ENCODE measurements at regions of chr17 and their contacts with region 1.

Region 1: DNA sequence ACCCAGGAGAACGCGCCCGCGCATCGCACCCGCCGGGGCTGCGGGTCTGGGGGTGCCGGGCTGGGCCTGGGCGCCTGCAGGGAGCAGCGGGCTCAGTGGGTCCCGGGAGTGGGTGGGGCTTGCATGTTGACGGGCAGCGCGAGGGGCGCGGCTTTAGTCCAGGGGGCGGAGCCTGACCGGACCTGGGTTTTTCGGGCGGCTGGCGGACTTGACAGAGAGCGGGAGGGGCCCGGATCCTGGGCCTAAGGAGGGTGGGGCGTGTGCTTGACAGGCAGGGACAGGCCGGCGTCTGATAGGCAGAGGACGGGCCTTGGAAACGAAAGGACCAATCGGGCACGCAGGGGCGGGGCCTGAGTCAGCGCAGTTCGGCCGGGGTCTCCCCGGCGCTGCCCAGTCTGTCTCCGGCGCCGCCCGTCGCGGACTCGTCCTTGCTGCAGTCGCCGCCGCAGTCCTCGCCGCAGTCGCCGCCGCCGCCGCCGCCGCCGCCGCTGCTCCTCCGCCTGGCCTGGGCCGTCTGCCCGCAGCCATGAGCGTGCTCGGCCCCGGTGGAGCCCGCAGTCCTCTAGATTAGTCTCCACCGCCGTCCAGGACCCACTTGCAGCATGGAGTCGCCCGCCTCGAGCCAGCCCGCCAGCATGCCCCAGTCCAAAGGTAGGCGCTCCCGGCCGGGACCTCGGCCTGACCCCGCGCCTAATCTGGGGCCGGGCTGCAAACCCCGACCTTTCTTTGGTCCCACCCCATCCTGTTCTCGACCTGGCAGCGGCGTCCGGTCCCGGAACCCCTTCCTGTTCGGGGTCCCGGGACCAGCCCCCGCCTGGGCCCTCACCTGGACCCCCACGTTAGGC is at the start of gene MAP2K3:
- DNase-seq: peak; percentile 99
- H3K4me3 Mint-ChIP-seq: peak within 1 kb of the TSS; percentile 86
- H3K27ac Mint-ChIP-seq: peak within 1 kb of the TSS; percentile 83
- H3K4me1 Mint-ChIP-seq: peaks cover 46% of the 10 kb centered on the region
- H3K27me3 Mint-ChIP-seq: no peaks in the 10 kb centered on the region
- CTCF ChIP-seq: no peak
- total RNA-seq, gene MAP2K3: 25.7 and 45.2 TPM in 2 replicates

Region 2: GRCh38 chr17:21119247-21119918 is 165.2 kb before region 1 on chr17:
- CTCF ChIA-PET with region 1: interaction called, 4 read pairs
- POLR2A ChIA-PET with region 1: interaction called, 6 read pairs
- intact Hi-C with region 1: loop called (anchors 2 kb)
- DNase-seq: peak; percentile 68
- H3K4me3 Mint-ChIP-seq: no peak overlapping the region
- H3K27ac Mint-ChIP-seq: no peak overlapping the region
- H3K4me1 Mint-ChIP-seq: peaks cover 6% of the 10 kb centered on the region
- H3K27me3 Mint-ChIP-seq: no peaks in the 10 kb centered on the region
- CTCF ChIP-seq: peak; percentile 82

Region 3: DNA sequence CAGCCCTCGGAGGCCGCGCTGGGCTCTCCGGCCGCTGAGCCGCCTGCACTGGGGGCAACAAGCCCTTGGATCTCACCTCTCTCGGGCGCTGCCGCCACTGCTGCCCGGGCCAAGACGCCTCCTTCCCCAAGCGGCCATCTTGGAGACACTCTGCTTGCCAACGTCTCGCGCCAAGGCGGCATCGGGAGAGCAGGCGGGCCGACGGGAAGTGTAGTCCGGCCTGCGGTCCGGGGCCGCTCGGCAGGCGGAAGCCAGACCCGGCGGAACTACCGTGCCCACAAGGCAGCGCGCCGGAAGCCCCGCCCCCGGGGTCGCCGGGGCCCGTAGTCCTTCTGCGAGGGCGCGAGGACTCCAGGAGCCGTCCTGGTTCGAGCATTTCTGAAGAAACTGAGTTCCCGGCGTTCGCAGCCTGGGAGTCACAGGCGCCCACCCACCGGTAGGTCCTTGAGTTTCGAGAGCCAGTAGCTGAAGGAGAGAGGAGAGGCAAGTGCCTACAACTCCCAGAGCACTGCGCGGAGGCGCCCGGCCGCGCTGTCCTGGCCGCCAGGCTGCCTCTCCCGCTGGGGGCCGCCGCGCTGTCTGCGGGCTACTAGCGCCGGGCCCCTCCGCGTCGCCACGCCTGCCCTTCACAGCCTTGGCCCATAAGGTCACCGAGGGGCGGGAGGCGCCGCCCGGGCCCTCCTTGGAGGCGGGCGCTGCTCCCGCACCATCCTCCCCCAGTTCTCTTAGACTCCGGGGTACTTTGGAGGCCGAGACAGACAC is 70.3 kb before region 1 on chr17 and contains the start of gene TMEM11:
- CTCF ChIA-PET with region 1: interaction called, 6 read pairs
- POLR2A ChIA-PET with region 1: interaction called, 47 read pairs
- intact Hi-C with region 1: loop called (anchors 5 kb)
- DNase-seq: peak; percentile 94
- H3K4me3 Mint-ChIP-seq: peak within 1 kb of the TSS; percentile 88
- H3K27ac Mint-ChIP-seq: peak within 1 kb of the TSS; percentile 96
- H3K4me1 Mint-ChIP-seq: peaks cover 39% of the 10 kb centered on the region
- H3K27me3 Mint-ChIP-seq: no peaks in the 10 kb centered on the region
- CTCF ChIP-seq: peak; percentile 6
- total RNA-seq, gene TMEM11: 27.8 and 33.5 TPM in 2 replicates

Region 4: DNA sequence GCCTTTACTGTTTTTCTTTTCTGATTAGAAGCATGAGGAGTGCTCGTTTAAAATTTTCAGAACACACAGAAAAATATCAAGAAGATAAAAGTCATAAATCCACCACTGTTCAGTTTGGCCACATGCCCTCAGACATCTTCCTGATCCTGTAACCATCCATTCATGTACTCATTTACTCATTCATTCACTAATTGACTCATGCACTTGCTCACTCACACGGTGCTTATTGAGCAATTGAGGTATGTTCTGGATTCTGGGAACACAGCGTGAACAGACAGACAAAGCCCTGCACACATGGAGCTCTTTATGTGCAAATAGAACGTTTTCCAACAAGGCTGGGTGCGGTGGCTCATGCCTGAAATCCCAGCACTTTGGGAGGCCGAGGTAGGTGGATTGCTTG is 21.2 kb before region 1 on chr17:
- CTCF ChIA-PET with region 1: interaction called, 7 read pairs
- POLR2A ChIA-PET with region 1: interaction called, 11 read pairs
- intact Hi-C with region 1: no loop called
- DNase-seq: peak; percentile 94
- H3K4me3 Mint-ChIP-seq: no peak overlapping the region
- H3K27ac Mint-ChIP-seq: peak overlapping the region; percentile 52
- H3K4me1 Mint-ChIP-seq: peaks cover 13% of the 10 kb centered on the region
- H3K27me3 Mint-ChIP-seq: no peaks in the 10 kb centered on the region
- CTCF ChIP-seq: no peak

Measured in MCF 10A (cell line).